Left cardiac atrium (tissue), 4 donors: ENCODE measurements at regions of chr13 and their contacts with region 1.

Region 1: GRCh38 chr13:102452831-102453230 is 51.0 kb upstream of the FGF14 start:
- DNase-seq: no peak
- ATAC-seq: peak in 1 of 2 donors; percentile 41

Region 2: DNA sequence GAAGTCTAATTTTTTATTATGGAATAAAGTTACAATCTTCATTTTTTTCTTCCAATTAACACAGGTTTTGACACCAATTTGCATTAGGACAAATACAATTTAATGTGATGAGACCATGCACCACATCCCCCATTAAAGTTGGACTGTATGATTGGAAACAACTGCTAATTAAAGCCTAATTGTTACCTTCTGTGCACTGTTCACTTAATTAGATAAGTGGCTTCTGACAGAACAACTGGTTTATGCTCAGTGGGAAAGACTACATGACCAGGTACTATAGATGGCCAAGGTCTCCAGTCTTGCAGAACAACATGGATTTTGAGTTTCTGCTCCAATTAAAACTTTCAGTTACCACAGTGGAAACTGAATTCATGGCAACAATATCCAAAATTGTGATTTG is 249.1 kb before region 1 on chr13:
- intact Hi-C with region 1: loop called in 1 of 2 experiments (anchors 10 kb)
- DNase-seq: no peak
- ATAC-seq: no peak

Region 3: GRCh38 chr13:102291587-102292218 is 161.1 kb before region 1 on chr13:
- intact Hi-C with region 1: no loop called
- DNase-seq: no peak
- ATAC-seq: peak; percentile 47 to 62